ENCODE measurements at regions of chr2 and their contacts with region 1.

Region 1: DNA sequence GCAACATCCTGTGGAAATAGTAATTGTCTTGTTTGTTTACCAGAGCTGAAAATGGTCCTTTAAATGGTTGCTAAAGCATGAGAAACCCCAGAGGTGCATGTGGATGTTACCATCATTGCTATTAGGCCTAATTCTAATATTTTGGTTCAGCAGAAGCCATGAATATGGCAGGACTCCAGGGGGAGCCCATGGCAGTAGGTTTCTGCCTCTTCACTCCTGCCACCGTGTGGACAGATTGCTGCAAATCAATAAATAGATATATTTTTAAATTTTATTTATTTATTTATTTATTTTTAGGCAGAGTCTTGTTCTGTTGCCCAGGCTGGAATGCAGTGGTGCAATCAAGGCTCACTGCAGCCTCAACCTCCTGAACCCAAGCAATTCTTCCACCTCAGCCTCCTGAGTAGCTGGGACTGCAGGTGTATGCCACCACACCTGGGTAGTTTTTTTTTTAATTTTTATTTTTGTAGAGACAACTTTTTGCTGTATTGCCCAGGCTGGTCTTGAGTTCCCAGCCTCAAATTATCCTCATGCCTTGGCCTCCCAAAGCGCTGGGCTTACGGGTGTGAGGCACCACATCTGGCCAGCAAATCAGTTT is 54.9 kb upstream of the CAPN13 start:
- DNase-seq: peak; percentile 73
- ATAC-seq: peak; percentile 53
- H3K4me3 ChIP-seq: no peak overlapping the region
- H3K27ac ChIP-seq: no peak overlapping the region
- H3K4me1 ChIP-seq: no peaks in the 10 kb centered on the region
- H3K27me3 ChIP-seq: no peaks in the 10 kb centered on the region
- CTCF ChIP-seq: peak; percentile 88
- POLR2A ChIP-seq: no peak
- RAD21 ChIP-seq: peak; percentile 49

Region 2: GRCh38 chr2:30208452-30208851 is 653.7 kb before region 1 on chr2:
- CTCF ChIA-PET with region 1: no interaction called
- POLR2A ChIA-PET with region 1: no interaction called
- dilution Hi-C with region 1: no loop called
- in situ Hi-C with region 1: loop called (anchors 25 kb)
- intact Hi-C with region 1: no loop called
- DNase-seq: peak; percentile 82
- ATAC-seq: peak; percentile 99
- H3K4me3 ChIP-seq: no peak overlapping the region
- H3K27ac ChIP-seq: no peak overlapping the region
- H3K4me1 ChIP-seq: peaks cover 2% of the 10 kb centered on the region; the same call in 1 of the 2 replicates
- H3K27me3 ChIP-seq: 0 out of 2 replicates have a peak, but pooled peaks cover 3% of the 10 kb centered on the region
- CTCF ChIP-seq: peak; percentile 95
- POLR2A ChIP-seq: peak; percentile 63
- RAD21 ChIP-seq: peak; percentile 98

Region 3: DNA sequence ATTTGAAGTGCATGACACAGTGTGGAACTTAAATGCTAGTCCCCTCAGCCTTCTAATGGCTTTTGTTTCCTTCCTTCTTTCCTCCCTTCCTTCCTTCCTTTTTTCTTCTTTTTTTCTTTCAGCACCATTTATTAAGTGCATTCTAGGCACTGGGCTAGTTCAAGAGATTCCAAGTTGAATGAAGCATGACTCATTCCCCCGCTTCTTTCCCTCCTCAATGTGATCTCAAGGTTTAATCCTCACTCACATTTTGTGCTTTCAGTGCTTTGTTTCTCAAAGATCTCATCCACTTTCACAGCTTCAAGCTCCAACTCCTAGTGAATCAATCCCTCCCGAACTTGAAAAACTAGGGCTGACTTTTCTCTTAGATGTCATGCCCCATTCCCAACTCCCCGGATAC is 540.7 kb before region 1 on chr2:
- CTCF ChIA-PET with region 1: no interaction called
- POLR2A ChIA-PET with region 1: no interaction called
- dilution Hi-C with region 1: no loop called
- in situ Hi-C with region 1: no loop called
- intact Hi-C with region 1: no loop called
- DNase-seq: peak; percentile 58
- ATAC-seq: peak; percentile 90
- H3K4me3 ChIP-seq: no peak overlapping the region
- H3K27ac ChIP-seq: no peak overlapping the region
- H3K4me1 ChIP-seq: no peaks in the 10 kb centered on the region
- H3K27me3 ChIP-seq: no peaks in the 10 kb centered on the region; the same call in 1 of the 2 replicates
- CTCF ChIP-seq: no peak
- POLR2A ChIP-seq: no peak
- RAD21 ChIP-seq: no peak

Region 4: GRCh38 chr2:31170071-31170698 is 308.0 kb after region 1 on chr2:
- CTCF ChIA-PET with region 1: interaction called, 5 read pairs
- POLR2A ChIA-PET with region 1: no interaction called
- dilution Hi-C with region 1: no loop called
- in situ Hi-C with region 1: no loop called
- intact Hi-C with region 1: loop called (anchors 5 kb)
- DNase-seq: peak; percentile 60
- ATAC-seq: peak; percentile 98
- H3K4me3 ChIP-seq: no peak overlapping the region
- H3K27ac ChIP-seq: no peak overlapping the region
- H3K4me1 ChIP-seq: no peaks in the 10 kb centered on the region
- H3K27me3 ChIP-seq: peaks cover 9% of the 10 kb centered on the region; the same call in 1 of the 2 replicates
- CTCF ChIP-seq: peak; percentile 83
- POLR2A ChIP-seq: no peak
- RAD21 ChIP-seq: peak; percentile 80

Measured in IMR-90 (cell line).